ENCODE measurements at regions of chr9 and their contacts with region 1.

Region 1: GRCh38 chr9:133782157-133783130 is 44.3 kb upstream of the SARDH start:
- DNase-seq: peak; percentile 60
- ATAC-seq: peak; percentile 35
- H3K4me3 Mint-ChIP-seq: peak overlapping the region; percentile 20
- H3K27ac Mint-ChIP-seq: peak overlapping the region; percentile 6
- H3K4me1 Mint-ChIP-seq: peaks cover 60% of the 10 kb centered on the region
- H3K27me3 Mint-ChIP-seq: no peaks in the 10 kb centered on the region
- CTCF ChIP-seq: peak; percentile 55

Region 2: GRCh38 chr9:133532937-133533668 is 249.3 kb before region 1 on chr9:
- CTCF ChIA-PET with region 1: no interaction called
- POLR2A ChIA-PET with region 1: no interaction called
- intact Hi-C with region 1: loop called (anchors 2 kb)
- DNase-seq: peak; percentile 49
- ATAC-seq: peak; percentile 86
- H3K4me3 Mint-ChIP-seq: no peak overlapping the region
- H3K27ac Mint-ChIP-seq: no peak overlapping the region
- H3K4me1 Mint-ChIP-seq: peaks cover 11% of the 10 kb centered on the region
- H3K27me3 Mint-ChIP-seq: peaks cover 31% of the 10 kb centered on the region
- CTCF ChIP-seq: no peak

Region 3: DNA sequence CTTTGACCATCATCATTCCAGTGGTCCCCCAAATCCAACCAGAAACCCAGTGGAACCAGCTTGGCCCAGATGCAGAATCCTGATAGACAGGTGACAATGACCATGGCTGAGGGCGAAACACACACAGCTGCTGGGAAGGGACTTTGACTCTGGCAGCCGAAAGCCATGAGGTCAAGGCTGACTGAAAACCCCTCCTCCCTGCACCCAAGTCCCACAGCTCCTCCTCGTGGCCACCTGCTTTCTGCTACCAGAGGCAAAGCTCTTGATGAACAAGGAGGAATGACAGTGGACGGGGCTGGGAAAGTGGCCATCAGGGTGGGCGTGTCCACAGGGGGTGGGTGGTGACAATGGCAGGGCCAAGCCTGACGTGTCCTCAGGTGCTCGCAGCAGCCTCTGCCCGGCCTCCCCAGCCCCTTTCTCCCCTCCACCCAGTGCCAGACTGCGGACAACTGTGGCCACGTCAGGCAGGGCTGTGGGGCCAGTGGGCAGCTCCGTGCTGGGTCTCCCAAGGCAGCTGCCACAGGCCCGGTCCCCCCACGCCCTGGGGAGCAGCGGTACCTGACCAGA is 13.5 kb before region 1 on chr9:
- CTCF ChIA-PET with region 1: interaction called, 11 read pairs
- POLR2A ChIA-PET with region 1: no interaction called
- intact Hi-C with region 1: no loop called
- DNase-seq: no peak
- ATAC-seq: no peak
- H3K4me3 Mint-ChIP-seq: no peak overlapping the region
- H3K27ac Mint-ChIP-seq: no peak overlapping the region
- H3K4me1 Mint-ChIP-seq: no peaks in the 10 kb centered on the region
- H3K27me3 Mint-ChIP-seq: no peaks in the 10 kb centered on the region
- CTCF ChIP-seq: no peak

Region 4: GRCh38 chr9:133876144-133876543 is 93.7 kb after region 1 on chr9:
- CTCF ChIA-PET with region 1: no interaction called
- POLR2A ChIA-PET with region 1: no interaction called
- intact Hi-C with region 1: loop called (anchors 10 kb)
- DNase-seq: no peak
- ATAC-seq: no peak
- H3K4me3 Mint-ChIP-seq: no peak overlapping the region
- H3K27ac Mint-ChIP-seq: peak overlapping the region; percentile 37
- H3K4me1 Mint-ChIP-seq: peaks cover 51% of the 10 kb centered on the region
- H3K27me3 Mint-ChIP-seq: no peaks in the 10 kb centered on the region
- CTCF ChIP-seq: no peak

Region 5: GRCh38 chr9:134099123-134099787 is 316.8 kb after region 1 on chr9:
- CTCF ChIA-PET with region 1: interaction called, 13 read pairs
- POLR2A ChIA-PET with region 1: no interaction called
- intact Hi-C with region 1: loop called (anchors 1 kb)
- DNase-seq: peak; percentile 24
- ATAC-seq: peak; percentile 85
- H3K4me3 Mint-ChIP-seq: no peak overlapping the region
- H3K27ac Mint-ChIP-seq: no peak overlapping the region
- H3K4me1 Mint-ChIP-seq: peaks cover 4% of the 10 kb centered on the region
- H3K27me3 Mint-ChIP-seq: peaks cover 7% of the 10 kb centered on the region
- CTCF ChIP-seq: no peak

Measured in activated B cell treated with CpG ODN at 0.5 μM for 24 hours (primary cell).